Heart left ventricle (tissue), 16 donors: ENCODE measurements at regions of chr5 and their contacts with region 1.

Region 1: DNA sequence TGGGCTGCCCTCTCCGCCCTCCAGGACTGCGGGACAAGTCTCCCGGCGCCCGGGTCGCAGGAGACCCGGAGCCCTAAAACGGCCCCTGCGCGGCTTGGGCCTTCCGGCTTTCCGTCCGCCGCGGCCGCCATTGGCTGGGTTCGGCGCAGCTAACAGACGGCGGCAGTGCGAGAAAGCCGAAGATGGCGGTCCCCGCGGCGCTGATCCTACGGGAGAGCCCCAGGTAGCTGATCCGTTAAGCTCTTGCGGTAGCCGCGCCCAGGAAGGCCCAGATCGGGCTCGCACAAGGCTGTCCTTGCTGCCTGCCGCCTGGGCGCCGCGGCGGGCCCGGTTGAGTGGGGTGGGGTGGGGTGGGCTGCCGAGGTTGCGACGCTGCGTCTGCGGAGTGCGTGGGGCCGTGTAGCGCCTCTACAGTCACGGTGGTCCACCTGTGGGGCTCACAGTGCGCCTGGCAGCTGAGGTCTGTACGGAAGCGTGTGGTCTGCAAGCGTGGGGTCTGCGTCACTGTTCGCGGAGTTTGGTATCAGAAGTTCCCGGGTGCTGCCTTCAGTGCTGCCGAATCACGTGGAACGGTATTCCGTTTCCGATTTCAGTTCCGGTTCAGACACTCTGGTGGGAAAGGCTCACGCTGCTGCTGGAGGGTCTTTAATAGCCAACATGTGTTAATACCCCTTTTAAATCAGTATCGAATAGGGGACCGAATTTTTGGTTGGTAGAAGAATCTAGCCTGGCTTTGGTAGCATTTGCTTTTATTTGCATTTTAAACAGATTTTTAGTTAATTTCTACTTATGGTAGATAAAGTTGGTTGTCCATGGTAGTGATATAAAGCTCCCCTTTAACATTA is at the start of gene COMMD10:
- DNase-seq: peak; percentile 75 to 90 (median 83)
- ATAC-seq: peak; percentile 87 to 94 (median 92)
- H3K4me3 ChIP-seq: peak within 1 kb of the TSS; percentile 75 to 98 (median 91)
- H3K27ac ChIP-seq: peak within 1 kb of the TSS; percentile 64 to 97 (median 92)
- H3K4me1 ChIP-seq: peaks cover 0 to 40% (median 24%) of the 10 kb centered on the region in 12 donors
- H3K27me3 ChIP-seq: no peaks in the 10 kb centered on the region
- CTCF ChIP-seq: no peak
- POLR2A ChIP-seq: peak in 1 of 2 donors; percentile 38
- total RNA-seq, gene COMMD10: 25.2 to 42.2 (median 29.8) TPM

Region 2: DNA sequence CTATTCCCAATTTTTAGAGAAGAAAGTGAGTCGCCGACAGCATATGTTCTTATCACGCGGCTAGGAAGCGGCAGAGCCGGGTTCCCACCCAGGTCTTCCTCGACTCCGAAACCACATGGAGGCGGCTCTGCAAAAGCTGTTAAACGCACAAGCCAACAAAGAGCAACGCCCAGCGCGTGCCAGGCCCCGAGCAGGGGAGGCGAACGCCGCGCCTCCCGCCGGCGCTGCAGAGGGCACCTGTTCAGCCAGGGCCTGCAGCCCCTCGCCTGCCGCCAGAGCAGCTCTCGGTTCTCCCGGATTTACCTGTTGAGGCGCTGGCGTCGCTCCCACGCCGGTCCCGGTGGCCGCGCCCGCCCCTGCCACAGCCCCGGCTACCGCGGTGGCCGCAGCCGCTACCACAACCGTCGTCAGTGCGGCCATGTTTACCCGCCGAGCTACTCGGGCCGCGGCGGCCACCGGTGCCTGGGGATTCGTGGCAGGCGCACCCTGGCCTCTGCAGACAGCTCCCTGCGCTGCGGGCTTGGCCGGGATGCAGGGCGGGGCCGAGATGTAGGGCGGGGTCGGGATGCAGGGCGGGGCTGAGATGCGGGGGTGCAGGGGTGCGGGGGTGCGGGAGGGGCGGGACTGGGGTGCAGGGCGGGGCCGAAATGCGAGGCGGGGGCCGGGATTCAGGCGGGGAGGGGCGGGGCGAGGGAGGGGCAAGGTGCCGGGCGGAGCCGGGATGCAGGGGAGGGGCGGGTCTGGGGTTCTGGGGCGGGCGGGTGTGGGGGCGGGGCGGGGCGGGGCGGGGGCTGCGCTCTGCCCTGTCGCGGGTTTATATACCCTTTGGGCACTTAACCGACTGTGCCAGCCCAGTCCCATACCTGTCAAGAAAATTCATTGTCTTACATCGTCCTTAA is 788.7 kb before region 1 on chr5 and contains the start of gene CCDC112:
- intact Hi-C with region 1: loop called in 1 of 10 experiments (anchors 10 kb)
- DNase-seq: peak; percentile 86 to 92 (median 86)
- ATAC-seq: peak; percentile 80 to 96 (median 92)
- H3K4me3 ChIP-seq: peak within 1 kb of the TSS; percentile 74 to 99 (median 92)
- H3K27ac ChIP-seq: peak within 1 kb of the TSS in 11 of 12 donors; percentile 47 to 82 (median 68)
- H3K4me1 ChIP-seq: peaks cover 0 to 15% (median 9%) of the 10 kb centered on the region in 12 donors
- H3K27me3 ChIP-seq: no peaks in the 10 kb centered on the region
- CTCF ChIP-seq: peak in 1 of 12 donors; percentile 11
- POLR2A ChIP-seq: peak in 1 of 2 donors; percentile 68
- total RNA-seq, gene CCDC112: 3.6 to 8.4 (median 5.6) TPM

Region 3: DNA sequence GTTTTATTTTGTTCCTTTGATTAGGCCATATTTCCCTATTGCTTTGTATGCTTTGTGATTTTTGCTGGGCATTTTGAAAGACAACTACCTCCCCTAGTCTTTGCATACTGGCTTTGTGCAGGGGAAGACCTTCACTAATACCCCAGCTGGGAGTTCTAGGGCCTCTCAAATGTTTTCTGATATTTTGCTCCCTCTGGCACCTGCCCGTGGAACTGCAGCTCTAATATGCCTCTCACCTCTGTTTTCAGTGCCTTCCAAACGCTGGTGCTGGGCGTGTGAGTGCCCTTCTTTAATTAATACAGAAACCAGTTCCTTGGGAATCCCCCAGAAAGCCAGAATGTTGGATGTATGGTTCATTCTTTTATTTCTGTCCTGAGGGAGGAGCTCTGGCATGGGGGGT is 204.2 kb after region 1 on chr5:
- intact Hi-C with region 1: no loop called
- DNase-seq: no peak
- ATAC-seq: no peak
- H3K4me3 ChIP-seq: no peak overlapping the region
- H3K27ac ChIP-seq: no peak overlapping the region
- H3K4me1 ChIP-seq: no peaks in the 10 kb centered on the region
- H3K27me3 ChIP-seq: no peaks in the 10 kb centered on the region
- CTCF ChIP-seq: no peak
- POLR2A ChIP-seq: no peak